BJ (cell line): ENCODE measurements at regions of chr2 and their contacts with region 1.

Region 1: DNA sequence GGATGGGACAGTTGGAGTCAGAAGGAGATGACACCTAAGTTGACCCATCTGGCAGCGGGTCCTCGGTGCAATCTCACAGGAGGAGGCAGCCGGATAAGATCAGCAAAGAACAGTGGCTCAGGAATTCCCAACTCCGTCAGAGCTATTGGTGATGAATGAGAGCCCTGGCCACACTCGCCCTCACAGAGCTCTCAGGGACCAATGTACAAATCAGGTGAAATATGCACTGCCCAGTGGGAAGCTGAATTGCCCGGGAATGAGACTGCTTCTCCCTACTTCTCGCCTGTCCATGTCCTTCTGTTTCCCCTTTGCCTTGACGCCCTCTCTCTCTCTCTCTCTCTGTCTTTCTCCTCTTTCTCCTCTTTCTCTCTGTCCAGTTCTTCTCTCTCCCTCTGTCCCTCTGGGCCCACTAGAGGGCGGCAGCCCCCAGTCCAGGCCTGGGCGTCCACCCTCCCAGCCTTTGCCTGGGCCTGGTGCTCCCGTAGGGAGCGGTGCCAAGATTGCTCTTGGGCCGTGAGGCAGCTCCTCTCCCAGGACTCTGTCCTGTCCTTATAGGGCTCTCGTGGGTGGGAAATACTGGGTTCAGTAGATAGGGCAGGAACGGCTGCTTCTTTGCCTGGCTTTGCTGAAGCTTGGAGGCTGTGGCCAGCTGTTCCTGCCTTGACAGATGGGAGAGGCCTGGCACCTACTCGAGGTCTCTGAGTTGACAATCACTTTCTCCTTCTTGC is 28.3 kb upstream of the PUM2 start:
- DNase-seq: peak; percentile 58
- H3K4me3 ChIP-seq: no peak overlapping the region
- H3K27me3 ChIP-seq: no peaks in the 10 kb centered on the region
- CTCF ChIP-seq: peak; percentile 97

Region 2: DNA sequence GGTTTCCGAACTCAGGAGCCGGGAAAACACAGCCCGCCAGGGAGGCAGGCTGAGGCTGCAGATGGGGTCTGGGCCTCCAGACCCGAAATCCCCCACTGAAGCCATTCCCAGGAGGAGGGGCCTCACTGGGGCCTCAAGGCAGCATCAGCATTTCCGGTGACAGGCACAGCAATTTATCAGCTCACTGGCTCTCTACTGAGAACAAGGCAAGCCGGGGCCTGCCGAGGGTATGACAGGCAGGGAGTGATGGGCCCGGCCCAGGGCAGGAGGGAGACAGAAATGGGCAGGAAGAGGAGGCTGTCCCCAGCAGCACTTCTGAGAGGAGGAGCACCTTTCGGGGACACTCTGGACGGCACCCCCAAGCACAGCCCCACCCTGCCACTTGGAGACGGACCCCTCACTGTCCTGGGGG is 166.5 kb before region 1 on chr2:
- CTCF ChIA-PET with region 1: no interaction called
- POLR2A ChIA-PET with region 1: no interaction called
- DNase-seq: no peak
- H3K4me3 ChIP-seq: no peak overlapping the region
- H3K27me3 ChIP-seq: no peaks in the 10 kb centered on the region
- CTCF ChIP-seq: no peak

Region 3: GRCh38 chr2:20391951-20392699 is 13.2 kb after region 1 on chr2:
- CTCF ChIA-PET with region 1: interaction called, 29 read pairs
- POLR2A ChIA-PET with region 1: no interaction called
- DNase-seq: no peak
- H3K4me3 ChIP-seq: no peak overlapping the region
- H3K27me3 ChIP-seq: peaks cover 25% of the 10 kb centered on the region
- CTCF ChIP-seq: no peak

Region 4: GRCh38 chr2:20411361-20411894 is 32.5 kb after region 1 on chr2:
- CTCF ChIA-PET with region 1: interaction called, 24 read pairs
- POLR2A ChIA-PET with region 1: no interaction called
- DNase-seq: no peak
- H3K4me3 ChIP-seq: no peak overlapping the region
- H3K27me3 ChIP-seq: peaks cover 13% of the 10 kb centered on the region
- CTCF ChIP-seq: peak; percentile 93

Region 5: DNA sequence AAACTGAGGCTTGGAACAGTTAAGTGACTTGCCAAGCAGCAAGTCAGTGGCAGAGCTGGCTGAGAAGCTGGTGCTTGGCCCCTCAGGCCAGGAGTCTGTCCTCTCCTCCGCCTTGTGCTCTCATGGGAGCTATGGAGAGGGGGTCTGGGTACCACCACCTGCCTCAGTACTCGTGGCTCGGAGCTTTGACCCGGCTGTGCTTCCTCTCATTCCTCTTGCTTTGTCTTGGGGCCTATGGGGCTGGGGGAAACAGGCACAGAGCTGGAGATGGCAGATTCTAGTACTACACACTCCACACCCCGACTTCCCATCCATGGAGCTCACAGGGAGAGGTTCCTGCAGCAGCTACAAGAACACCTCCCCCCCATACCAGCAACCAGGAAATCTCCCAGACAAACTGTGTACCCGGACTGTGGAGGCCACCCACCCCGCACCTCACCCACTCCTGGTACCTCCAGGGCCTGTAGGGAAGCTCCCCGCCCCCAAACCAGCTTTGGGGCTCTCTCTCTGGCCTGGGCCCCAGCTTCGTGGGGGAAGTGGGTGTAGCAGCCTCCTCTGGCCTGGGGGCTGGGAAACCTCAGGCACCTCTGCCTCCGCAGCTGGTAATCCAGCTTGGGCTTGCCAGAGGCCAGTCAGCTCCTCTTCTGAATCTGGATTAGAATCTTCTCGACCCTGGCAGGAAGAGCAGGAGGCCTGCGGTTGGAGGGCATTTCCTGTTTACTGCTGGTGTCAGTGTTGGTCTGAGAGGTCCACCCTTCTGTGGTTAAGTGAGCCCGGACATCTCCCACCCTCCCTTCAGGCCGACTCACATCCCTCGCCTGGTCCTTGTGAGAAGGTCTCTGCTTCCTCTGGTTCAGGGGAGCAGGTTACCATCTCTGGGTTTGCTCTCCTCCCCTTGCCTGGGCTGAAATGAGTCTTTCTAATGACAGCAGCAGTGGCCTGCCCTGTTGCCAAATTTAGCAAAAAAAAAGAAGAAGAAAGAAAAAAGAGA is 45.6 kb after region 1 on chr2:
- CTCF ChIA-PET with region 1: interaction called, 19 read pairs
- POLR2A ChIA-PET with region 1: no interaction called
- DNase-seq: peak; percentile 73
- H3K4me3 ChIP-seq: no peak overlapping the region
- H3K27me3 ChIP-seq: peaks cover 7% of the 10 kb centered on the region; the same call in 1 of the 2 replicates
- CTCF ChIP-seq: no peak